H1 (cell line): ENCODE measurements at regions of chr13 and their contacts with region 1.

Region 1: GRCh38 chr13:95698047-95698749 is 21.3 kb downstream of the DNAJC3 start:
- DNase-seq: no peak
- H3K4me3 ChIP-seq: no peak overlapping the region
- H3K27ac ChIP-seq: no peak overlapping the region
- H3K4me1 ChIP-seq: no peaks in the 10 kb centered on the region
- H3K27me3 ChIP-seq: no peaks in the 10 kb centered on the region
- CTCF ChIP-seq: peak in 2 of 3 experiments; percentile 23 to 49; a peak in 1 of 4 replicates
- EP300 ChIP-seq: no peak
- POLR2A ChIP-seq: no peak
- RAD21 ChIP-seq: peak in 1 of 2 experiments; percentile 24; a peak in 1 of 4 replicates

Region 2: DNA sequence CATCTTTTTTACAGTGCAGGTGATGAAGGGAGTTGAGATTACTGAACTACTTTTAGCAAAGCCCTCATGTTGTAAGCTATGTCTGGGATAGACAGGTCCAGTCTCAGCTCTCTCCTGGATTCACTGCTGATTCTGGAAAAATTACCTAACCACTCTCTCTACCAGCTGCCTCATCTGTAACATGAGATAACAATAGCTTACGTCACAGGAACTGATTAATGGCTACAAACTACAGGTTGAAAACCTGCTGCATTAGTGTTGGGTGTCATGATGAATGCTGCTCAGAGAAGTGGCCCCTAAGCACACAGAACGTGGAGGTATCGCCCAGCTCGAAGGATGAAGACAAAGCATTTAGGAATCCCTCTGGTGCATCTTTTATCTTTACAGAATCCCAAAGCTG is 674.8 kb before region 1 on chr13:
- CTCF ChIA-PET with region 1: no interaction called
- POLR2A ChIA-PET with region 1: no interaction called
- DNase-seq: no peak
- H3K4me3 ChIP-seq: no peak overlapping the region
- H3K27ac ChIP-seq: no peak overlapping the region
- H3K4me1 ChIP-seq: no peaks in the 10 kb centered on the region
- H3K27me3 ChIP-seq: no peaks in the 10 kb centered on the region
- CTCF ChIP-seq: no peak
- EP300 ChIP-seq: no peak
- POLR2A ChIP-seq: no peak
- RAD21 ChIP-seq: no peak

Region 3: DNA sequence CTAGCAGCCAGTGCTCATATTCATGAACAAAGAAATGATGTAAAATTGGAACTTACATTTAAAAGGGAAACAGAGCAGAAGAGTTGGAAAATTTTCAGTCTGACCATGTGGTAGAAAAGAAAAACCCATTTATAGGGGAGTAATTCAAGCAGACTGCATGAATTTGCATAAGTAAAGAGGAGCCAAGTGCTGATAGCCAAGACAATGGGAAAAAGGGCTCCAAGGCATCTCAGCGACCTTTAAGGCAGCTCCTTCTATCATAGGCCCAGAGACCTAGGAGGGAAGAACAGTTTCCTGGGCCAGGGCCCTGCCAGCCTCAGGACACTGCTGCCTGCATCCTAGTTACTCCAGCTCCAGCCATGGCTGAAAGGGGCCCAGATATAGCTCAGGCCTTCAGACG is 13.8 kb before region 1 on chr13:
- CTCF ChIA-PET with region 1: interaction called, 13 read pairs
- POLR2A ChIA-PET with region 1: no interaction called
- DNase-seq: no peak
- H3K4me3 ChIP-seq: no peak overlapping the region
- H3K27ac ChIP-seq: no peak overlapping the region
- H3K4me1 ChIP-seq: peaks cover 0 to 8% (median 3%) of the 10 kb centered on the region in 4 experiments; a peak in 4 of 7 replicates
- H3K27me3 ChIP-seq: no peaks in the 10 kb centered on the region
- CTCF ChIP-seq: no peak
- EP300 ChIP-seq: no peak
- POLR2A ChIP-seq: no peak
- RAD21 ChIP-seq: no peak